RWPE1 (cell line): ENCODE measurements at regions of chr18 and their contacts with region 1.

Region 1: GRCh38 chr18:3995476-3996102 is 459.5 kb downstream of the DLGAP1 start:
- DNase-seq: peak; percentile 22
- H3K27ac ChIP-seq: no peak overlapping the region
- CTCF ChIP-seq: peak; percentile 88

Region 2: DNA sequence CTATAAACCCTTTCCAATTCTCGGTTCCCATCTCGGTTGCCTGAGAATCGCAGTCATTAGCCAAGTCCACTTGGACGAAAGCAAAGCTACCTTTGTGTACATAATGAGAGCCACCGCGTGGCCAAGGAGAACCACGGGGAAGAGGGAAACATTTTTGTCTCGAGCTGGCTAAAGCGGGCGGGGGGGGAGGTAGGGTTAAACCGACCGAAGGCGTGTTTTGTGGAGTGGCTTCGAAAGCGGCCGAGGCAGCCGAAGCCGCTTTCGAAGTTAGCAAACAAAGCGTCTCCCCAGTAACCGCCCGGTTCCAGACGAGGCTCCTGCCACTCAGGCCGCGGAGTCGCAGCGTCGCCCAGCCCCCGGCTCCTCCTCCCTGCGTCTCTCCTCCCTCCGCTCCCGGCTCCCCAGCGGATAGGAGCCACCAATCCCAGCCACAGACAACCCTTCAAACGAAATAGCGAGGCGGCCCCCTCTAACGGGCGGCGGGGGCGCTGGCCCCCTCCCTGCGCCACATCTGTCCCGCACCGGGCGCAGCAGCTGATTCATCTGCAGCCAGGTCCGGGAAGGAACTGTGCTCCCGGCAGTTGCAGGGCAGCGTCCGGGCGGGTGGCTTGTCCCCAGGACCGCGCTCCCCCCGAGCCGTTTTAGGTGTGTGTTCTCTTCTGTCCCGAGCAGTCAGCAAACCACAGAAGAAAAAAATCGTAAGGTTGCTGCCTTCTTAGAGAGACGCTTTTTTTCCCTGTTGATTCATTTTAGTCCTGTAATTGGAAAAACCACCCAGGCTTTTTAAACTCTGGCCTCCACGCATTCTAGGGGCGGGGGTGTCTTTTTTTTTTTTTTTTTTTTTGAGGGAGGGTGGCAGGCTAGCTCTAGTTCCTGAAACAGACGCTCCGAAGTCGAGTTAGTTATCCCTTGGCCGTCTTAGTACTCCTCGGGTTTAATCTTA is 547.4 kb before region 1 on chr18:
- CTCF ChIA-PET with region 1: no interaction called
- POLR2A ChIA-PET with region 1: no interaction called
- DNase-seq: peak; percentile 93
- H3K27ac ChIP-seq: peak overlapping the region; percentile 100
- CTCF ChIP-seq: peak; percentile 22; the same call in 1 of the 2 replicates

Region 3: DNA sequence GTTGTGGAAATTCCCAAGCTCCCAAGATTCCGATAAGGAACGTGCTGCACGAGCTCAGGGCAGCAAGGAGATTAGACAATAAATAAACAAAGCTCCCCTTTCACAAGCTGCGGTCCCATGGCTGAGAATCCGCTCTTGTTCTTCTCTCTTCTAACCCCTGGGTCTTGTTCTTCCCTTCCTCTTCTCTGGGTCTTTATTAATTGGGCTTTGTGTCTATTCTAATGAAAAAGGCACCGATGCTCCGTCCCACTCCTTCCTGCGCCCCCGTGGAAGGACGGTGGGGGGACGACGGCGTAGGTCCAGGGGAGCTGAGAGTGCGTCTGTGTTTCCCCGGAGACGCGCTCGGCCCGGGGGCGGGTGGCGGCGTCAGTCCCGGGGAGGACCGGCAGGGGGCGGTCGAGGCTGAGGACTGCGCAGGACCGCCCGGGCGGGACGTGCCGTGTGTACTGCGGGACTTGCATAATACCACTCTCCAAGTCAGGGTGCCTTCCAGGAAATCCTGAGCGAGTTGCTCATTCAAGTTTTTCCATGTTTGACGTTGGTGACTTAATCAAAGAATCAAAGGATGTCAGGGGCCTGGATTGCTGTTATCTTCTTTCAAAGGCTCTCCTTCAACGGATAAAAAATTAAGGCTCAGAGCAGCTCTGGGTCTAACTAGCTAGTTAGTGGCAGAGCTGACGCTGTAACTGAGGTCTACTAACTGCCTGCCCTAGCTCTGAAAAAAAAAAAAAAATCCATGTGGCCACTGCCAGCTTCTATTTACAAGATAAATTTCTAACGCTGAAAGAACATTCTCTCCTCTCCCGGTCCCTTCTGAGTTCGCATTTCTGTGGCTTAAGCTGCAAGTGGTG is 224.2 kb before region 1 on chr18:
- CTCF ChIA-PET with region 1: interaction called, 22 read pairs
- POLR2A ChIA-PET with region 1: no interaction called
- DNase-seq: peak; percentile 91
- H3K27ac ChIP-seq: peak overlapping the region; percentile 31; the same call in 1 of the 2 replicates
- CTCF ChIP-seq: peak; percentile 96

Region 4: DNA sequence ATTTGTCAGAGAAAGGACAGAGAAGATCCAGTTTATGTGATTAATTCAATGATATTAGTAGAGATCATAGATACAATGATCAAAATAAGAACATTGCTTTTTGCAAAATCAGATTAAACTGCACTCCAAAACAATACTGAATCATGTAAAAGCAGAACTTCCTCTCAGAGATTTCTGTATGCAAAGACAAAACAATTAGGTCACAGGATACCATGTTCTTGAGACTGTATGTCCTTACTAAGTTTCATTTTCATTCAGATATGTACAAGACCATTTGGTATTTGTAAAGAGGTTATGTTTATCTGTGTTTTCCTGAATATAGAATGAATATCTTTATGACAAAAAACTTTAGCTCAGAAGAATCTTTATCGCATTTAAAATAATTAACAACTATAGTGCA is 297.7 kb after region 1 on chr18:
- CTCF ChIA-PET with region 1: no interaction called
- POLR2A ChIA-PET with region 1: no interaction called
- DNase-seq: no peak
- H3K27ac ChIP-seq: no peak overlapping the region
- CTCF ChIP-seq: no peak